ENCODE measurements at regions of chr1 and their contacts with region 1.

Region 1: DNA sequence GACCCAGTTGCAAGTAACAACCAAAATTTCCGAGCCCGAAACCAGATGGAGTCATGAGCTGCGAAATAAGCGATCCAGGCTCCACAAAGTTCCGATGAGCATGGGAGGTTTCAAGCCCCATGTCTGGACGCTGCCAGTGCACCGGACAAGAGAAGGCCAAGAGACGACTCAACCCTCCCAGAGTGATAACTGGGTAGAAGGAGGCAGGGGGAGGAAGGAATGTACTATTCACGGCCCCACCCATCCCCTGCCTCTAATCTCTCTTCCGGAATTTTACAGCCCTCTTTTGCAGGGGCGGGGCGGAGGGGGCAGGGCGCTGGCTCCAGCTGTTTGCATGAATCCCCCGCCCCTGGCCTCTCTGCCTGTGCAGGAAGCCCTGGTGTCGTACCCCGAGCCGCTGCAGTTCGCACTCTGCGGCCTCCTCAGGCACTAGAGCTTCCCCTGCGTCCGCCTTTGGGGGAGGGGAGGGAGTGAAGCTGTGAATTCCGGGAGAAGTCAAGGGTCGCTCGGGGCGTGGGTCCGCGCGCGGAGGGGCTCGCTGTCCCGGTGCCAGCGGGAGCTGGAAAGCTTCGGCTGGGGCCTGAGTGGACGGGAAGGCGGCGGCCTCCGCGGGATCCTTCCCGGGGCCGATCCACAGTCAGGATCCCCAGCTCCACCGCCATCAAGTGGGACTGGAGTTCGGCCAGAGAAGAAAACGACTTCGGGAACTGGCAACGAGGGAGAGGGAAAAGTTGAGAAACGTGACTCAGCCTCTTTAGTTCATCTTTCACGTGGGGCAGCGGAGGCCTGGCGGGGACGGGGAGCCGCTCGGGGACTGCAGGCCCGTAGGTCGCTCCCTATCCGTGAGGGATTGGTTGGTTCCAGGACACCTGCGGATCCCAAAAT is 6.3 kb upstream of the PTP4A2 start:
- DNase-seq: peak; percentile 78 to 89 (median 81)
- H3K4me3 ChIP-seq: peak overlapping the region; percentile 53 to 86
- H3K4me3 Mint-ChIP-seq: peak overlapping the region; percentile 82 to 95 (median 88)
- H3K27ac ChIP-seq: peak overlapping the region; percentile 80
- H3K27ac Mint-ChIP-seq: peak overlapping the region; percentile 91 to 98 (median 97)
- H3K4me1 ChIP-seq: peaks cover 73% of the 10 kb centered on the region
- H3K4me1 Mint-ChIP-seq: peaks cover 33 to 71% (median 50%) of the 10 kb centered on the region in 4 donors
- H3K27me3 ChIP-seq: no peaks in the 10 kb centered on the region
- H3K27me3 Mint-ChIP-seq: no peaks in the 10 kb centered on the region

Region 2: DNA sequence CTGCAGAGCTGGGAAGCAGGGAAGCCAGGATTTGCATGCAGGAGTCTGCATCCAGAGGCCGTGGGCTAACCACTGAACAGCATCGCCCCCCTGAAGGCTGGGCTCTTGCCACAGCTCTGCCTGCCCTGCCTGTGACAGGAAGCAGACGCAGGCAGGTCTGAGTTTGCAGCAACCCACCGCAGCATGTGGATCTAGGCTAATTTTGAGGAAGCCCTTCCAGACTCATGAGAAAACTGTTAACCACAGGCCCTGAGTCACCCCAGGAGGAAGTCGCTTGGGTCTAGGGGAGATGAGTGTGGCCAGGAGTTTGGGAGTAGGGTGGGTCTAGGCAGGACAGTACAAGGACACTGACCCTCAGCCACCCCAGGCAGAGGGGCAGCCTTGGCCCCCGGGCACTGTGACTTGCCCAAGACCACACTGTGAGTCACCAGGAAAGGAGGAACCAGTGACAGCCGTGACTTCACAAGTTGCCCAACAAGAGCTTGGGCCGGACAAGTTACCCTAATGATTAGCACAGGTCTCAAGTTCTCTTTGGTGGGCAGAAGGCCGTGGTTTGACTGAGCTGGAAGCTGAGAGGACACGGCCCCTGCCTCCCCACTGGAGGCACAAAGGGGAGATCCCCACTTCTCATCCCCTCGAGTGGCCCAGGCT is 1187.8 kb before region 1 on chr1:
- CTCF ChIA-PET with region 1: no interaction called
- POLR2A ChIA-PET with region 1: no interaction called
- intact Hi-C with region 1: loop called (anchors 5 kb)
- DNase-seq: peak; percentile 69 to 94 (median 75)
- H3K4me3 ChIP-seq: peak overlapping the region; percentile 96
- H3K4me3 Mint-ChIP-seq: peak overlapping the region; percentile 97 to 100 (median 100)
- H3K27ac ChIP-seq: peak overlapping the region; percentile 92
- H3K27ac Mint-ChIP-seq: peak overlapping the region; percentile 95 to 100 (median 98)
- H3K4me1 ChIP-seq: peaks cover 84% of the 10 kb centered on the region
- H3K4me1 Mint-ChIP-seq: peaks cover 57 to 100% (median 69%) of the 10 kb centered on the region in 4 donors
- H3K27me3 ChIP-seq: no peaks in the 10 kb centered on the region
- H3K27me3 Mint-ChIP-seq: no peaks in the 10 kb centered on the region

Region 3: DNA sequence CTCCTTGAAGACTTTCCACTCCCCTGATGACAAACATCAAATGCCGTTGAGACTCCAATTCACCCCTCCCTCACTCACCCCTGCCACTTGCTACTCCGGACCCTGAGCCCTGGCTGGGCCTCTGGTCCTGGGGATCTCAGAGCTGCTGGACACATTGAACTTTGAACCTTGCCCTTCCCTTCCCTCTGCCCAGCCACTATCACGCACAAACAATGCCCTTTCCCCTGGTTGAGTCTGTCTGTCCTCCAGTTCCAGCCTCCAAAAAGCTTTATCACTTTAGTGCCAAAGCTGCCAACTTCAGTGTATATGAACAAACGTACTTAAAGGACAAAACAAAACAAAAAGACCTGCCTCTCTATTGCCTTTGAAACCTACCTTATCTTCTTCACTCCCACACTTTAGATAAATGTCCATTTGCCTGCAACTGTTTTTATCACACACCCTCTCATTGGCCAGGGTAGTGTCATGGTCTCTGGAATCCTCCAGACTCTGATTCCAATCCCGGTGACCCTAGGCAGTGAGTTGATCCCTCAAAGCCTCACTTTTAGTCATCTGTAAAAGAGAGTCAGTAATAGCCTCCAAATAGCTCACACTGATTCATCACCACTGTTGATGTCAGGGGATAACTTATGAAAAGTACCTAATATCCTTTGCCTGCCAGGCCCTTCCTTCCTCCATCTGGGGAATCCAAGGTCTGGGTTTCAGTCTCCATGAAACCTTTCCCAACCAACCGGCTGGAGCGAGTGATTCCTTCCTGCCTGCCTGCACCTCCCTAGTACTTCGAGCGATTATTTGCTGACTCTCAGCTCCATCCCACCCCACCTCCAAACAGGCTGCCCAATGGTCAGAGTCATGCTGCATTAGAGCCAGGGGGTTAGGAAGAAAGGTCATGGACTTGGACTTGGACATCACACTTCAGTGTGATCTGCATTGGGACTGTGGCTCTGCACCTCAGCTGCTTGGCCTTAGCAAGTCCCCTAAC is 112.8 kb before region 1 on chr1:
- CTCF ChIA-PET with region 1: interaction called, 3 read pairs
- POLR2A ChIA-PET with region 1: interaction called, 33 read pairs
- intact Hi-C with region 1: no loop called
- DNase-seq: no peak
- H3K4me3 ChIP-seq: no peak overlapping the region
- H3K4me3 Mint-ChIP-seq: no peak overlapping the region
- H3K27ac ChIP-seq: no peak overlapping the region
- H3K27ac Mint-ChIP-seq: peak overlapping the region in 2 of 7 donors; percentile 13 to 27
- H3K4me1 ChIP-seq: peaks cover 27% of the 10 kb centered on the region
- H3K4me1 Mint-ChIP-seq: peaks cover 24 to 36% (median 27%) of the 10 kb centered on the region in 4 donors
- H3K27me3 ChIP-seq: no peaks in the 10 kb centered on the region
- H3K27me3 Mint-ChIP-seq: no peaks in the 10 kb centered on the region

Region 4: GRCh38 chr1:31891280-31891679 is 53.2 kb before region 1 on chr1:
- CTCF ChIA-PET with region 1: interaction called, 5 read pairs
- POLR2A ChIA-PET with region 1: interaction called, 32 read pairs
- intact Hi-C with region 1: loop called (anchors 2 kb)
- DNase-seq: no peak
- H3K4me3 ChIP-seq: no peak overlapping the region
- H3K4me3 Mint-ChIP-seq: no peak overlapping the region
- H3K27ac ChIP-seq: no peak overlapping the region
- H3K27ac Mint-ChIP-seq: peak overlapping the region in 3 of 7 donors; percentile 54 to 94 (median 88)
- H3K4me1 ChIP-seq: peaks cover 17% of the 10 kb centered on the region
- H3K4me1 Mint-ChIP-seq: peaks cover 13 to 27% (median 21%) of the 10 kb centered on the region in 4 donors
- H3K27me3 ChIP-seq: no peaks in the 10 kb centered on the region
- H3K27me3 Mint-ChIP-seq: no peaks in the 10 kb centered on the region

Region 5: DNA sequence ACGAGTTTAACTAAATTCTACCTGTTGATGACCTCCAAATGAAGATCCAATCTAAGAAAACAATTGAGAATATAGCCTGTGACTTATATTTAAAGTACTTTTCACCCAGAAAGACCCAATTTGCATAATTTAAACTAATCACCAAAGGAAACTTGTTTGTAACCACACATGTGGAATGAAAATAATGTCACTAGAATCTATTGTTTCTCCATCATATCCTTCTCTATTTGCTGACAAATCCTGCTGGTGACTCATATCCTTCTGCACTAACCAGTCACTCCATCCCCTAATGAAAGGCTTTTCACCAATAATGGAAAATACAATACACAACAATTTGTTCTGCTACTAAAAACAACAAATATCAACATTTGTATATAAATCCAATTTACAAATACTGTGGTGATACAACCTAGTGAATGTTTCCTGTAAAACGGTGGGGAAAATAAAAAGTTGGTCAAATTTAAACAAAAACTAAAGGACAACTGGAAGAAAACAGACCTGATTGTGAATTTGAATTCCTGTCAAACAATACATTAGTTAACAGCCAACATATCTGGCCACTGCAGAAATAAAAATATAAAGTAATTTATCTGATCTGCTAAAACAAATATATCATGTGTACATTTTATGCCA is 12.7 kb before region 1 on chr1:
- CTCF ChIA-PET with region 1: interaction called, 17 read pairs
- POLR2A ChIA-PET with region 1: interaction called, 190 read pairs
- intact Hi-C with region 1: no loop called
- DNase-seq: peak in 1 of 5 donors; percentile 43
- H3K4me3 ChIP-seq: peak overlapping the region in 1 of 2 donors; percentile 17
- H3K4me3 Mint-ChIP-seq: peak overlapping the region; percentile 45 to 99 (median 84)
- H3K27ac ChIP-seq: peak overlapping the region; percentile 70
- H3K27ac Mint-ChIP-seq: peak overlapping the region; percentile 91 to 96 (median 95)
- H3K4me1 ChIP-seq: peaks cover 93% of the 10 kb centered on the region
- H3K4me1 Mint-ChIP-seq: peaks cover 64 to 97% (median 79%) of the 10 kb centered on the region in 4 donors
- H3K27me3 ChIP-seq: no peaks in the 10 kb centered on the region
- H3K27me3 Mint-ChIP-seq: no peaks in the 10 kb centered on the region

Region 6: GRCh38 chr1:32013386-32014198 is 69.1 kb after region 1 on chr1 and contains the start of gene KHDRBS1:
- CTCF ChIA-PET with region 1: interaction called, 3 read pairs
- POLR2A ChIA-PET with region 1: interaction called, 12 read pairs
- intact Hi-C with region 1: loop called (anchors 2 kb)
- DNase-seq: peak; percentile 98 to 99 (median 99)
- H3K4me3 ChIP-seq: peak within 1 kb of the TSS; percentile 89 to 100
- H3K4me3 Mint-ChIP-seq: peak within 1 kb of the TSS; percentile 89 to 99 (median 98)
- H3K27ac ChIP-seq: peak within 1 kb of the TSS; percentile 95
- H3K27ac Mint-ChIP-seq: peak within 1 kb of the TSS; percentile 97 to 99 (median 98)
- H3K4me1 ChIP-seq: peaks cover 37% of the 10 kb centered on the region
- H3K4me1 Mint-ChIP-seq: peaks cover 20 to 38% (median 30%) of the 10 kb centered on the region in 4 donors
- H3K27me3 ChIP-seq: no peaks in the 10 kb centered on the region
- H3K27me3 Mint-ChIP-seq: no peaks in the 10 kb centered on the region
- total RNA-seq, gene KHDRBS1: 114 to 122 TPM

Region 7: GRCh38 chr1:32107742-32108661 is 163.6 kb after region 1 on chr1 and contains the start of gene KPNA6:
- CTCF ChIA-PET with region 1: no interaction called
- POLR2A ChIA-PET with region 1: no interaction called
- intact Hi-C with region 1: loop called (anchors 5 kb)
- DNase-seq: peak; percentile 93 to 95 (median 94)
- H3K4me3 ChIP-seq: peak within 1 kb of the TSS; percentile 67 to 83
- H3K4me3 Mint-ChIP-seq: peak within 1 kb of the TSS; percentile 96 to 100 (median 100)
- H3K27ac ChIP-seq: peak within 1 kb of the TSS; percentile 94
- H3K27ac Mint-ChIP-seq: peak within 1 kb of the TSS; percentile 93 to 100 (median 97)
- H3K4me1 ChIP-seq: peaks cover 47% of the 10 kb centered on the region
- H3K4me1 Mint-ChIP-seq: peaks cover 31 to 62% (median 45%) of the 10 kb centered on the region in 4 donors
- H3K27me3 ChIP-seq: no peaks in the 10 kb centered on the region
- H3K27me3 Mint-ChIP-seq: no peaks in the 10 kb centered on the region
- total RNA-seq, gene KPNA6: 60.3 to 62.5 TPM

Region 8: DNA sequence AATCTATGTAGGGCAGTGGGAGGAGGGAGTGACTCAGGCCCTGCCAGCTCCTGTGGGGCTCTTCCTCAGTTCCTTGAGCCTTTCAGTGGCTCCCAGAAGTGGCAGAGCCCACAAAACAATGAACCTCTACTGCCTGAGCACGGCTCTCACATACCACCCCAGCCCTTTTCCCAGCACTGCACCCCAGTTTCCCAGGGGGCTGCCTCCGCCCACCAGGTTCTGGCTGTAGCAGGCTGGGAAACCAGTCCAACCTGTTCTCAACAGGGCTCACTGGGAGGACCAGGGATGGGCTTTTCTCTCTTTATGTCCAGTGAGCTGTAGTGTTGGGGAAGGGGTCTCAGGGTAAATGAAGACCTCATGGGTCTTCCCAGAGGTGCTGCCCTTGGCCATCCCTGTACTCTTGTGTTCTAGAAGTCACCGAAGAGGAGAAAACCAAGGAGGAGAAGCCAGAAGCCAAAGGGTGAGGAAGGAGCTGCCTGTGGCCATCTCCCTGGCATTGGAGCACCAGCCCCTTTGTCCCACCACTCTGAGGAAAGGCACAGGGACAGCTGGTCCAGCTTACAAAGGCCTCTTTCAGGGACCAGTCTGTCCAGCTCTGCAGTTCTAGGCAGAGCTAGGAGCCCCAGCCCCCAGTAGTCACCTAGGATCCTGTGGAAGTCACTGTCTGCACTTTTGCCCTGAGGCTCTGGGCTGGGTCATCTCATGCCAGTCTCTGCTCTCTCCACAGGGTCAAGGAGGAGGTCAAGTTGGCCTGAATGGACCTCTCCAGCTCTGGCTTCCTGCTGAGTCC is 388.0 kb after region 1 on chr1:
- CTCF ChIA-PET with region 1: no interaction called
- POLR2A ChIA-PET with region 1: no interaction called
- intact Hi-C with region 1: no loop called
- DNase-seq: no peak
- H3K4me3 ChIP-seq: no peak overlapping the region
- H3K4me3 Mint-ChIP-seq: no peak overlapping the region
- H3K27ac ChIP-seq: no peak overlapping the region
- H3K27ac Mint-ChIP-seq: peak overlapping the region in 2 of 7 donors; percentile 36 to 75
- H3K4me1 ChIP-seq: peaks cover 31% of the 10 kb centered on the region
- H3K4me1 Mint-ChIP-seq: peaks cover 20 to 35% (median 25%) of the 10 kb centered on the region in 4 donors
- H3K27me3 ChIP-seq: no peaks in the 10 kb centered on the region
- H3K27me3 Mint-ChIP-seq: no peaks in the 10 kb centered on the region

Measured in CD4-positive, alpha-beta memory T cell (primary cell).